H1 (cell line): ENCODE measurements at regions of chr19 and their contacts with region 1.

Region 1: GRCh38 chr19:54168174-54168917 is 4.6 kb downstream of the TMC4 start:
- DNase-seq: peak in 1 of 2 experiments; percentile 100
- H3K4me3 ChIP-seq: peak overlapping the region in 2 of 4 experiments; percentile 5 to 34; a peak in 2 of 8 replicates
- H3K27ac ChIP-seq: no peak overlapping the region
- H3K4me1 ChIP-seq: peaks cover 0 to 10% (median 6%) of the 10 kb centered on the region in 4 experiments; a peak in 6 of 7 replicates
- H3K27me3 ChIP-seq: peaks cover 0 to 7% (median 4%) of the 10 kb centered on the region in 4 experiments; a peak in 4 of 7 replicates
- CTCF ChIP-seq: peak; percentile 81 to 92 (median 91)
- EP300 ChIP-seq: no peak
- POLR2A ChIP-seq: no peak
- RAD21 ChIP-seq: peak; percentile 57

Region 2: GRCh38 chr19:53801257-53801656 is 367.1 kb before region 1 on chr19:
- CTCF ChIA-PET with region 1: no interaction called
- POLR2A ChIA-PET with region 1: no interaction called
- DNase-seq: no peak
- H3K4me3 ChIP-seq: no peak overlapping the region
- H3K27ac ChIP-seq: no peak overlapping the region
- H3K4me1 ChIP-seq: no peaks in the 10 kb centered on the region
- H3K27me3 ChIP-seq: no peaks in the 10 kb centered on the region; a peak in 1 of 7 replicates
- CTCF ChIP-seq: no peak
- EP300 ChIP-seq: no peak
- POLR2A ChIP-seq: no peak
- RAD21 ChIP-seq: no peak

Region 3: DNA sequence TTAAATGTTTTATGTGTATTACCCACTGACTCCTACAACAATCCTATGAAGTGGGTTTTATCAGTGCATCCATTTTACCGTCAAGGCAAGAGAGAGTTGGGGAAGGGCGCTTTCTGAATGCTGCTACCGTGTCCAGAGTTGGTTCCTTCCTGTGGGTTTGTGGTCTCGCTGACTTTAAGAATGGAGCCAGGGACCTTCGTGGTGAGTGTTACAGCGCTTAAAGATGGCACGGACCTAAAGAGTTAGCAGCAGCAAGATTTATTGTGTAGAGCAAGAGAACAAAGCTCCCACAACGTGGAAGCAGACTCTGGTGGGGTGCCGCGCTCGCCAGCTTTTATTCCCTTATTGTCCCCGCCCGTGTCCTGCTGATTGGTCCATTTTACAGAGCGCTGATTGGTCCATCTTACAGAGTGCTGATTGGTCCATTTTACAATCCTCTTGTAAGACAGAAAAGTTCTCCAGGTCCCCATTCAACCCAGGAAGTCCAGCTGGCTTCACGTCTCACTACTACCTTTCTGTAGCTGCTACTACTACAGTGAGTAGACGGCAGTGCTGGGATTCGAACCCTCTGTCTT is 73.8 kb before region 1 on chr19:
- CTCF ChIA-PET with region 1: no interaction called
- POLR2A ChIA-PET with region 1: no interaction called
- DNase-seq: no peak
- H3K4me3 ChIP-seq: no peak overlapping the region
- H3K27ac ChIP-seq: no peak overlapping the region
- H3K4me1 ChIP-seq: peaks cover 0 to 5% (median 2%) of the 10 kb centered on the region in 4 experiments; a peak in 4 of 7 replicates
- H3K27me3 ChIP-seq: peaks cover 6 to 29% (median 19%) of the 10 kb centered on the region in 4 experiments
- CTCF ChIP-seq: no peak
- EP300 ChIP-seq: no peak
- POLR2A ChIP-seq: no peak
- RAD21 ChIP-seq: no peak

Region 4: GRCh38 chr19:54128796-54129616 is 39.3 kb before region 1 on chr19:
- CTCF ChIA-PET with region 1: no interaction called
- POLR2A ChIA-PET with region 1: no interaction called
- DNase-seq: no peak
- H3K4me3 ChIP-seq: no peak overlapping the region
- H3K27ac ChIP-seq: no peak overlapping the region
- H3K4me1 ChIP-seq: no peaks in the 10 kb centered on the region
- H3K27me3 ChIP-seq: no peaks in the 10 kb centered on the region
- CTCF ChIP-seq: no peak
- EP300 ChIP-seq: no peak
- POLR2A ChIP-seq: no peak
- RAD21 ChIP-seq: no peak

Region 5: GRCh38 chr19:54189735-54190502 is 21.6 kb after region 1 on chr19:
- CTCF ChIA-PET with region 1: interaction called, 7 read pairs
- POLR2A ChIA-PET with region 1: interaction called, 55 read pairs
- DNase-seq: peak; percentile 100
- H3K4me3 ChIP-seq: peak overlapping the region; percentile 67 to 96 (median 83)
- H3K27ac ChIP-seq: peak overlapping the region; percentile 99
- H3K4me1 ChIP-seq: peaks cover 3 to 12% (median 7%) of the 10 kb centered on the region in 4 experiments; a peak in 5 of 7 replicates
- H3K27me3 ChIP-seq: no peaks in the 10 kb centered on the region
- CTCF ChIP-seq: no peak
- EP300 ChIP-seq: no peak
- POLR2A ChIP-seq: peak; percentile 73 to 79; a peak in 2 of 3 replicates
- RAD21 ChIP-seq: no peak